IMR-90 (cell line): ENCODE measurements at regions of chr4 and their contacts with region 1.

Region 1: DNA sequence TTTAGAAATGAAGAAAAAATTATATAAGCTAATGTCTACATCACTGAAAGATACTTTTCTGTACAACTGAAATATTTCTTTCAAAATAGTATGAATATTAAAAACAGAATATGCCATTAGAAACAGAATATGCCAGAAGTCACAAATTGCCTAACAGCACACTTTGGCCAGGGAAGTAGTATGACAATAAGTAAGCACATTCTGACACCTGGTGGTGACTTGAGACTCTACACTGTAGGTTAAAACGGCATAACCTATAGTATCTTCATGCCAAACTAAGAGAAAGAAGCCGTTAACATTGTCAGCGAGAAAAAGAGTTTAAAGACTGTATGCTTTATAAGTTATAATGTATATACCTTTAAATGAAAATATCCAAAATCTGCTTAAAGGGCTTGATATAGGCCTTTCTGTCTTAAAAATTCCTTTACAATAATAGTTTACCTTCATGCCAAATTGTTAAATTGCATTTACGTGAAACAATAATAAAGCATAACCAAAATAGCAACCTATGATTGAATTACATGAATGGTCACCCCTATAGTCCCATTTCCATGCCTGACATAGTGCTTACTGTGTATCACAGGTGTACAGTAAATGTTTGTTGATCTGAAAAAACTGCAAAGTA is 32.8 kb downstream of the FAM13A start:
- DNase-seq: peak; percentile 81
- ATAC-seq: peak; percentile 95
- H3K4me3 ChIP-seq: no peak overlapping the region
- H3K27ac ChIP-seq: no peak overlapping the region
- H3K4me1 ChIP-seq: no peaks in the 10 kb centered on the region
- H3K27me3 ChIP-seq: no peaks in the 10 kb centered on the region
- CTCF ChIP-seq: peak; percentile 89
- POLR2A ChIP-seq: peak; percentile 49; the same call in 1 of the 2 replicates
- RAD21 ChIP-seq: peak; percentile 98

Region 2: DNA sequence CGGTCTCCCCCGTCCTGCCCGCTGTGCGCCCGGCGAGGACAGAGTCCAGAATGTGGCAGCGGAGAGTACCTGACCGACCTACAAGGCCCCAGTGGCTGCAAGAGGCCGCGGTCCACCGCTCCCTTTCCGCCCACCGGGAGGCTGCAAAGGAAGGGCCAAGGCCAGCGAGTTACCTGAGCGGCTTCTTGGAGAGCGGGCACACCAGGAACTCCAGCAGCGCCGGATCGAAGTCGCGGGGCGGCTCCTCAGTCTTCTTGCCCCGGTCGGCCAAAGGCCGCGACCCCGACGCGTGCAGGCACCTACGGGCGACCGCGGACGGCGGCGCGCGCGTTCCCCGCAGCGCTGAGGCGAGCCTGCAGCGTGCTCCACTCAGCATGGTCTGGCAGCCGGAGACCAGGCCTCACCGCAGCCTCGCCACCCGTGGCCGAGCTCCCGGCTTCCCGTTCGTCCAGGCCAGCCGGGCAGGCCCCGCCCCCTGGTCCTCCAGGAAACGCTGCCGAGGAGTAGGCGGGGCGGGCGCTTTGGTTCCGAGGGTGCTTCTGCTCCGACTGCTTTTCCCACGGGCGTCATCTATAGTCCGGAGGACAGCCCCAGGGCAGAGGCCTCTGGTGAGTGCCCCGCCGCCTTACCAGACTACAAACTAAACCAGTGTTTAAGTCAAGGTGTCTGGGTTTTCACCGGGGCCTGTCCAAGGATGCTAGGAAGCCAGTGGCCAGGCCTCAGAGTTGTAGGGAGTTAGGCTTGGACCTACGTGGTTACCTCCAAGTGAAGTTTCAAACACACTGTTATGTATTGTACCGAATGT is 500.6 kb before region 1 on chr4 and contains the start of gene PYURF:
- CTCF ChIA-PET with region 1: no interaction called
- POLR2A ChIA-PET with region 1: no interaction called
- dilution Hi-C with region 1: no loop called
- in situ Hi-C with region 1: loop called (anchors 5 kb)
- intact Hi-C with region 1: no loop called
- DNase-seq: peak; percentile 91
- ATAC-seq: peak; percentile 97
- H3K4me3 ChIP-seq: peak within 1 kb of the TSS; percentile 89
- H3K27ac ChIP-seq: peak within 1 kb of the TSS; percentile 90
- H3K4me1 ChIP-seq: peaks cover 3% of the 10 kb centered on the region
- H3K27me3 ChIP-seq: no peaks in the 10 kb centered on the region
- CTCF ChIP-seq: 0 out of 2 replicates have a peak, but pooled peaks have one; percentile 0
- POLR2A ChIP-seq: peak; percentile 76
- RAD21 ChIP-seq: no peak
- total RNA-seq, gene PYURF: 43.4 and 61.7 TPM in 2 replicates

Region 3: DNA sequence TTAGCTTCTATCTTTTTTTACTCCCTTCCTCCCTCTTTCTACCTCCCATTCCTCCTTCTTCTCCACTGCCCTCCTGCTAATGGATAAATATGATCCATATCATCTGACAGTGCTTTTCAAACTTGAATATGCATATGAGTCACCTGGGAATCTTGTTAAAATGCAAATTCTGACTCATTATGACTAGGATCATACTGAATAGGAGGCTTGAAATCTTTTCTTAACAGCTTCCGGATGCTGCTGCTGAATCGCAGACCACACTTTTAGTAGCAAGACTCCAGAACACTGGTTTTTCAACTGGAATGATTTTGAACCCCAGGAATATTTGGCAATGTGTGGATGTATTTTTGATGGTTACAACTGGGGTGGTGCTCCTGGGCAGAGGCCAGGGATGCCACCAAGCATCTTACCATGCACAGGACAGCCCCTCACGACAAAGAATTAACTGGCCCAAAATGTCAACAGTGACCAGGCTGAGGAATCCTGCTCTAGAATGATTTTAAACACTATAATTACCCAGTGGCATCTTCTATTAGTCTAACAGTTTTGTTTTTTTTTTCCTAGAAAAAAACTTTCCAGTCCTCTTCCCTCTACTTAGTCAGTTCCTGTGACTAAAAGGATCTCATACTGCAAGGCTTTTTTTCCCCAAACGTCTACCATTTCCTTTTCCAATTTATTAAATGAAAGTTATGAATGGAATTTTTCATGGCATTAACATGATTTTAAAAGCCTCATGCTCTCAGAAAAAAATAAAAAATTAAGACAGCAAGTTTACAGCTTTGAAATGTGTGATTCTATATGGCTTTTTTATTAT is 490.0 kb before region 1 on chr4:
- CTCF ChIA-PET with region 1: interaction called, 3 read pairs
- POLR2A ChIA-PET with region 1: no interaction called
- dilution Hi-C with region 1: no loop called
- in situ Hi-C with region 1: loop called (anchors 5 kb)
- intact Hi-C with region 1: loop called (anchors 2 kb)
- DNase-seq: peak; percentile 94
- ATAC-seq: peak; percentile 76
- H3K4me3 ChIP-seq: no peak overlapping the region
- H3K27ac ChIP-seq: peak overlapping the region; percentile 96
- H3K4me1 ChIP-seq: peaks cover 4% of the 10 kb centered on the region
- H3K27me3 ChIP-seq: no peaks in the 10 kb centered on the region
- CTCF ChIP-seq: no peak
- POLR2A ChIP-seq: peak; percentile 56; the same call in 1 of the 2 replicates
- RAD21 ChIP-seq: no peak

Region 4: DNA sequence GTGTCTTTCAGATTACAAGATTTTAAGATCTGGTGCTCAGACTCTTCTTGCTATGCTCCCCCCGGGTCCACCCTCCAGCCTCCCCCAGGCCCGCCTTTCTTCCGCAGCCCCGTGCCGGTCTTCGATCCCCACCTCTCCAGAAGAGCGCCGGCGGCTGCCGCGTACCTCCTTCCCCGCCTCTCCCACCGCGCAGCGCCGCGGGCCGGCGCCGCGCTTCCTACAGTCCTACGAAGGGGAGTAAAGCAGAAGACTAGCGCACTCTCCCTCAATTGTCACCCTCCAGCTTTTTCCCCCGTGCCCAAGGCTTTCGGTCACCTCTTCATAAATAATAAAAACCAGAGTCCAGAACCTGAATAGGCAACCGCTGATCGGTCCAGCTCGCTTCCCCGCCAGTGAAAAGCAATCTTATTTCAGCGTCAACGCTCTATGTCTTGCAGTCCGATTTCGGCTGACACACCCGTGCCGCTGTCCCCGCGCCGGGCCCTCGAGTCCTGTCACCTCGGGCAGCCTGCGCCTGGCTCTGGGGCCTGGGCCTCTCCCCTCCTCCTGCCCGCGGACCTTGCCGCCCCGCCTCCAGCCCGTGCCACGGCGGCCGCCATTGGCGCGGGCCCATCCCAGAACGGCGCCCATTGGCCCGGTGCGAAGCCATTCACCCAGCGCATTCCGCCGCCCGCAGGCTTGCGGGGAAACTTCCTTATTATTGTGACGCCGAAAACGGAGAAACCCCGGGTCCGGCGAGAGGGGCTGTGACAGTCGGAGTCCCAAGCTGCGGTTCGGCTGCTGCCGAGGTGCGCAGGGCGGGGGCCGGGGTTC is 432.2 kb before region 1 on chr4 and contains the start of gene HERC3:
- CTCF ChIA-PET with region 1: no interaction called
- POLR2A ChIA-PET with region 1: no interaction called
- dilution Hi-C with region 1: no loop called
- in situ Hi-C with region 1: no loop called
- intact Hi-C with region 1: loop called (anchors 5 kb)
- DNase-seq: peak; percentile 80
- ATAC-seq: peak; percentile 98
- H3K4me3 ChIP-seq: peak within 1 kb of the TSS; percentile 62
- H3K27ac ChIP-seq: peak within 1 kb of the TSS; percentile 60
- H3K4me1 ChIP-seq: peaks cover 4% of the 10 kb centered on the region; the same call in 1 of the 2 replicates
- H3K27me3 ChIP-seq: no peaks in the 10 kb centered on the region
- CTCF ChIP-seq: 0 out of 2 replicates have a peak, but pooled peaks have one; percentile 11
- POLR2A ChIP-seq: peak; percentile 43; the same call in 1 of the 2 replicates
- RAD21 ChIP-seq: no peak
- total RNA-seq, gene HERC3: 9.5 and 13.1 TPM in 2 replicates

Region 5: GRCh38 chr4:88706574-88706973 is 317.6 kb before region 1 on chr4:
- CTCF ChIA-PET with region 1: interaction called, 4 read pairs
- POLR2A ChIA-PET with region 1: interaction called, 15 read pairs
- dilution Hi-C with region 1: no loop called
- in situ Hi-C with region 1: loop called (anchors 5 kb)
- intact Hi-C with region 1: loop called (anchors 1 kb)
- DNase-seq: peak; percentile 77
- ATAC-seq: peak; percentile 76
- H3K4me3 ChIP-seq: no peak overlapping the region
- H3K27ac ChIP-seq: 0 out of 2 replicates have a peak overlapping the region, but pooled peaks have one; percentile 26
- H3K4me1 ChIP-seq: peaks cover 10% of the 10 kb centered on the region
- H3K27me3 ChIP-seq: no peaks in the 10 kb centered on the region
- CTCF ChIP-seq: peak; percentile 74
- POLR2A ChIP-seq: no peak
- RAD21 ChIP-seq: peak; percentile 88

Region 6: DNA sequence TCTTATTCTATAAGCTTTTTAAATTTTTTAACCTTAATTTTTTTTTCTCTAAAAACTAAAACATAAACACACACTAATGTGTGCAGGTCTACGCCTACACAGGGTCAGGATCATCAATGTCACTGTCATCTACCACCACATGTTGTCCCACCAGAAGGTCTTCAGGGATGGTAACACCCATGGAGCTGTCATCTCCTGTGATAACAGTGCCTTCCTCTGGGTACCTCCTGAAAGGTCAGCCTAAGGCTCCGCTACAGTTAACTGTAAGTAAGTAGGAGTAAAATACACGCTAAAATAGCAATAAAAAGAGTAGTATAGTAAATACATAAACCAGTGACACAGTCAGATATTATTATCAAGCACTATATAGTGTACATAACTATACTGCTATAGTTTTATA is 329.4 kb after region 1 on chr4:
- CTCF ChIA-PET with region 1: no interaction called
- POLR2A ChIA-PET with region 1: no interaction called
- dilution Hi-C with region 1: no loop called
- in situ Hi-C with region 1: no loop called
- intact Hi-C with region 1: no loop called
- DNase-seq: no peak
- ATAC-seq: no peak
- H3K4me3 ChIP-seq: no peak overlapping the region
- H3K27ac ChIP-seq: no peak overlapping the region
- H3K4me1 ChIP-seq: no peaks in the 10 kb centered on the region
- H3K27me3 ChIP-seq: no peaks in the 10 kb centered on the region; the same call in 1 of the 2 replicates
- CTCF ChIP-seq: no peak
- POLR2A ChIP-seq: no peak
- RAD21 ChIP-seq: no peak

Region 7: DNA sequence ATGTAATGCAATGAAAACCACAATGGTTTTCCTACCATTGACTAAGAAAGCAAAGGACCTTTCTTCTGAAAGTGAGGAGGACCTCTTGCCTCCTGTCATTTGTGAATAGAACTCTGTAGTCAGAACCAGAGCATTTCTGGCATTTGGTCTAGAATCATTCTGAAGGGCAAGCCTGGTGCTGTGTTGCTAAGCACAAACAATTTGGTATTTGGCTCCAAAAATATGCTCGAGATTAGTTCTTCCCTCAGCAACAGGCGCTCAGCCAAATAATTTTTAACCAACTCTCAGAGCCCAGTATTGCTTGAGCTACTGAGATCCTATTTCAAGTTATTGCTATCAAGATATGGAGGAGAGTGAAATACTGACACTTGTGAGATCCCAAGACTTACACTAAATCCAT is 741.8 kb after region 1 on chr4:
- CTCF ChIA-PET with region 1: no interaction called
- POLR2A ChIA-PET with region 1: no interaction called
- dilution Hi-C with region 1: no loop called
- in situ Hi-C with region 1: no loop called
- intact Hi-C with region 1: no loop called
- DNase-seq: peak; percentile 63
- ATAC-seq: peak; percentile 89
- H3K4me3 ChIP-seq: no peak overlapping the region
- H3K27ac ChIP-seq: no peak overlapping the region
- H3K4me1 ChIP-seq: no peaks in the 10 kb centered on the region
- H3K27me3 ChIP-seq: no peaks in the 10 kb centered on the region
- CTCF ChIP-seq: no peak
- POLR2A ChIP-seq: no peak
- RAD21 ChIP-seq: no peak